ENCODE measurements at regions of chrX and their contacts with region 1.

Region 1: DNA sequence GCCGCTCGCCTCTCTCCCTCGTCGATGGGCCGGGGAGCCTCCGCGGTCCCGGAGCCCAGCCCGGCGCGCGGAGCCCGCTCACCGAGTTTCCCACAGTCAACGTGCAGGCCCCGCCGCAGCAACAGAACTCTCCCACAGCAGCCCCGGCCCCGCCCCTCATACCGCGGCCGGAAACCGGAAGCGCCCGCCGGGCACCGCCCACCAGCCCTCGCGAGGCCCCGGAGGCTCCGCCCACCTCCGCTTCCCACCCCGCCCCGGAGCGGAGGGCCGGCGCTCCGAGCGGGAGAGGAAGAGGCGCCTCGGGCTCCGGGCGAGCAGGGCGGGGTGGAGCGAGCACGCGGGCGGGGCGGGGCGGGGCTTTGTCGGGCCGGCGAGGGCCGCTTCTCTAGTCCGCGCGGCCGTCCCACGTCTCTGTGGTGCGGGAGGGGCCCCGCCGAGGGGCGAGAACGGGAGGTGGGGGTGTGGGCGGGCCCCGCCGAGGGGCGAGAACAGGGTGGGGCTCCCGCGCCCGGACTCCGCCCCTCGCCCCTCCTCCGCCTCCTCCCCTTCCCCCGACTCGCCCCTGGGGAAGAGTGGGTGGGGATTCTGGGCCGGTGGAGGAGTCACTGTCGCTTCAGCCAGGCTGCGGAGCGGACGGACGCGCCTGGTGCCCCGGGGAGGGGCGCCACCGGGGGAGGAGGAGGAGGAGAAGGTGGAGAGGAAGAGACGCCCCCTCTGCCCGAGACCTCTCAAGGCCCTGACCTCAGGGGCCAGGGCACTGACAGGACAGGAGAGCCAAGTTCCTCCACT is at the starts of genes ABCD1 and BCAP31:
- DNase-seq: peak; percentile 93
- ATAC-seq: peak; percentile 84
- H3K4me3 Mint-ChIP-seq: peak within 1 kb of the TSS; percentile 89
- H3K27ac Mint-ChIP-seq: peak within 1 kb of the TSS; percentile 87
- H3K4me1 Mint-ChIP-seq: peaks cover 20% of the 10 kb centered on the region
- H3K27me3 Mint-ChIP-seq: no peaks in the 10 kb centered on the region
- total RNA-seq, gene ABCD1: 4.5 to 4.8 TPM
- total RNA-seq, gene BCAP31: 78.0 to 106 TPM

Region 2: DNA sequence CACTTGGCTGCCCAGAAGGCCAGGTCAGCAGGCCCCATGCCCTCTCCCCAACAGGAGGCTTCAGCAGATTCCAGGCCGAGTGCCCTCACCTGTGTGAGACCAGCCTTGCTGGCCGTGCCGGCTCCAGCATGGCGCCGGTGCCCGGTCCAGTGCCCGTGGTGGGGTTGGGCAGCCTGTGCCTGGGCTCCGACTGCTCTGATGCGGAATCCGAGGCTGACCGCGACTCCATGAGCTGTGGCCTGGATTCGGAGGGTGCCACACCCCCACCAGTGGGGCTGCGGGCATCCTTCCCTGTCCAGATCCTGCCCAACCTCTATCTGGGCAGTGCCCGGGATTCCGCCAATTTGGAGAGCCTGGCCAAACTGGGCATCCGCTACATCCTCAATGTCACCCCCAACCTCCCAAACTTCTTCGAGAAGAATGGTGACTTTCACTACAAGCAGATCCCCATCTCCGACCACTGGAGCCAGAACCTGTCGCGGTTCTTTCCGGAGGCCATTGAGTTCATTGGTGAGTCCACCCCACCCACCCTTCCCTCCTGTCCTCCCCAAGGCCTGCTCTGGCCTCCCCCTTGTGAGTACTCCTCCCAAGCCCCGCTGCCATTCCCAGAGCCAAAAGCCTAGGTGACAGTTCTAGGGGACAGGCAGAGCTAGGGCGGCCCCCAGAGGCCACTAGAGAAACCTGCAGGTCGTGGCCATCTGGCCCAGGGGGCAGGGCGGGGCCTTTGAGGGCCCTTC is 75.1 kb before region 1 on chrX:
- CTCF ChIA-PET with region 1: no interaction called
- POLR2A ChIA-PET with region 1: no interaction called
- intact Hi-C with region 1: no loop called
- DNase-seq: peak; percentile 64
- ATAC-seq: peak; percentile 84
- H3K4me3 Mint-ChIP-seq: no peak overlapping the region
- H3K27ac Mint-ChIP-seq: no peak overlapping the region
- H3K4me1 Mint-ChIP-seq: no peaks in the 10 kb centered on the region
- H3K27me3 Mint-ChIP-seq: peaks cover 17% of the 10 kb centered on the region

Region 3: DNA sequence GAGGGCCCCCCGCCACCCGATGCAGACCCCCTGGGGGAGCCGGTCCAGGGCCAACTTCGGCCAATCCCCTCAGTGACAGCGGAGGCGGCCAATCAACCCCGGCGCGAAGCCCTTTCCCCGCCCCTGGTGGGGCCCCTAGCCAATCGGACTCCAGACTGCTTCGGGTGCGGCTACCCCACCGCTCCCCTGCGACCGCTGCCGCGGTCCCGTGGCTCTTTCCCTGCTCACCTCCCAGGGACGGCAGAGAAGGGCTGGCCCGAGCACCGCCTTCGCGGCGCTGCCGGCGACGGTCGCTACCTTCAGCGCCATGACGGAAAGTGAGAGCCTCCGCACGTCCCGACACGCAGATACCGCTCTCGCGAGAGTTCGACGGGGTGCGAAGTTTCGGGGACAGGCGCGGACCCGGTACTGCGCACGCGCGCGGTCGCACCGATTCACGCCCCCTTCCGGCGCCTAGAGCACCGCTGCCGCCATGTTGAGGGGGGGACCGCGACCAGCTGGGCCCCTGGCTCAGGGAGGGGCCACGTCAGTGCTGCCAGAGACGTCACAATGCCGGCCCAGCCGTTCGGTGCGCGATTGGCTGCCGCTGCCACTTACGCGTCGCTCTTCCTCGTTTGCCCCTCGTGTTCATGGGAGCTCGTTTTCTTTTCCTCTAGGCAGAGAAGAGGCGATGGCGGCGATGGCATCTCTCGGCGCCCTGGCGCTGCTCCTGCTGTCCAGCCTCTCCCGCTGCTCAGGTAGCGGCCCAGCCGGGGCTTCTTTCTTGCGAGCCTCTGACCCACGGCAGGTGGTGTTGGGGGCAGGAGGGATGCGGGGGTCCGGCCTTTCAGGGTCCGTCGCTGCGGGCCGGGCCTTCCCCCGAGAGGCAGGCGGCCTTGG is 69.8 kb after region 1 on chrX and contains the starts of genes IDH3G and SSR4:
- CTCF ChIA-PET with region 1: no interaction called
- POLR2A ChIA-PET with region 1: interaction called, 3 read pairs
- intact Hi-C with region 1: loop called (anchors 1 kb)
- DNase-seq: peak; percentile 96
- ATAC-seq: peak; percentile 97
- H3K4me3 Mint-ChIP-seq: peak within 1 kb of the TSS; percentile 93
- H3K27ac Mint-ChIP-seq: peak within 1 kb of the TSS; percentile 93
- H3K4me1 Mint-ChIP-seq: peaks cover 21% of the 10 kb centered on the region
- H3K27me3 Mint-ChIP-seq: no peaks in the 10 kb centered on the region
- total RNA-seq, gene IDH3G: 48.8 to 62.4 TPM
- total RNA-seq, gene SSR4: 124 to 146 TPM

Region 4: GRCh38 chrX:154378782-154379591 is 654.5 kb after region 1 on chrX and contains the start of gene EMD:
- CTCF ChIA-PET with region 1: no interaction called
- POLR2A ChIA-PET with region 1: no interaction called
- intact Hi-C with region 1: loop called in 1 of 2 experiments (anchors 10 kb)
- DNase-seq: peak; percentile 98
- ATAC-seq: peak; percentile 88
- H3K4me3 Mint-ChIP-seq: peak within 1 kb of the TSS; percentile 84
- H3K27ac Mint-ChIP-seq: peak within 1 kb of the TSS; percentile 91
- H3K4me1 Mint-ChIP-seq: peaks cover 23% of the 10 kb centered on the region
- H3K27me3 Mint-ChIP-seq: no peaks in the 10 kb centered on the region
- total RNA-seq, gene EMD: 75.9 to 89.4 TPM